ENCODE measurements at regions of chr1 and their contacts with region 1.

Region 1: DNA sequence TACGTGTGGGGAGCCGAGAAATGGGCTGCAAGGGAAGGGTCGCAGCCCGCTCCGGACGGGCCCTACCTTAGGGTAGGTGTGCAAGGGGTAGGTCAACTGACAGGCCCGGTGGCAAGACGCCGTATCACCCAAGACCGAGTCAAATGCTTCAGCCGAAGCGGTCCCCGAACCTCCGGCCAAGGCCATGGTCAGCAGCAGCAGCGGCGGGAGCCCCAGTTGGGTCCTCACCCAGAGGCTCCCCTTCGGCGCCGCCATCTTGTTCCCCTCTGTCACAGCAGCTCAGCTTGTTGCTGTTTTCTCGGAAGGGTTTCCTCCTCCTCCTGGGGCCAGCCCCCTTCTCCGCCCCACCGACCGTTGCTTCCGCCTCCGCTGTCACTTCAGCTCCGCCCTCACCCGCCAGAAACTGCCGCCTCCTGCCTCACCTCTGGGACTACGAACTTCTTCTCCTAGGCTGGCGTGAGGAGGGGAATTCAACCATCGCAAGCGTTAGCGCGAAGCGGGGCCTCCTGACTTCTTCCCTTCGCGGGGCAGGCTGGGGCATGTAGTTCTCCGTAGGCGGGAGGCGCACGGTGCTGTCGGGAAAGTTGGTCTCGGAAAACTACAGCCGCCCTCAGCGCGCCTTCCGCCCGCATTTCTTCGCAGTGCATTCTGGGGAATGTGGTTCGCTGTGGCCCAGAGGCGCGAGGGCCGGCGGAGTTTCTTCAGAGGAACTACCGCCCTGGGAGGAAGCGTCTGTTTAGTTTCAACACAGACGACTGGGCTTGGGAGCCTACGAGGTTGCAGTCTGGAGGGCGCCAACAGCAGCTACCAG is at the starts of genes TCEANC2 and TMEM59:
- DNase-seq: peak; percentile 99
- H3K4me3 Mint-ChIP-seq: no peak within 1 kb of the TSS
- H3K27ac Mint-ChIP-seq: no peak within 1 kb of the TSS
- H3K4me1 Mint-ChIP-seq: peaks cover 28% of the 10 kb centered on the region
- H3K27me3 Mint-ChIP-seq: no peaks in the 10 kb centered on the region
- total RNA-seq, gene TCEANC2: 10.0 and 11.6 TPM in 2 replicates
- total RNA-seq, gene TMEM59: 99.3 and 127 TPM in 2 replicates

Region 2: GRCh38 chr1:53326088-53326597 is 727.0 kb before region 1 on chr1:
- intact Hi-C with region 1: loop called (anchors 5 kb)
- DNase-seq: peak; percentile 98
- H3K4me3 Mint-ChIP-seq: peak overlapping the region; percentile 99
- H3K27ac Mint-ChIP-seq: peak overlapping the region; percentile 97
- H3K4me1 Mint-ChIP-seq: peaks cover 40% of the 10 kb centered on the region
- H3K27me3 Mint-ChIP-seq: no peaks in the 10 kb centered on the region

Region 3: DNA sequence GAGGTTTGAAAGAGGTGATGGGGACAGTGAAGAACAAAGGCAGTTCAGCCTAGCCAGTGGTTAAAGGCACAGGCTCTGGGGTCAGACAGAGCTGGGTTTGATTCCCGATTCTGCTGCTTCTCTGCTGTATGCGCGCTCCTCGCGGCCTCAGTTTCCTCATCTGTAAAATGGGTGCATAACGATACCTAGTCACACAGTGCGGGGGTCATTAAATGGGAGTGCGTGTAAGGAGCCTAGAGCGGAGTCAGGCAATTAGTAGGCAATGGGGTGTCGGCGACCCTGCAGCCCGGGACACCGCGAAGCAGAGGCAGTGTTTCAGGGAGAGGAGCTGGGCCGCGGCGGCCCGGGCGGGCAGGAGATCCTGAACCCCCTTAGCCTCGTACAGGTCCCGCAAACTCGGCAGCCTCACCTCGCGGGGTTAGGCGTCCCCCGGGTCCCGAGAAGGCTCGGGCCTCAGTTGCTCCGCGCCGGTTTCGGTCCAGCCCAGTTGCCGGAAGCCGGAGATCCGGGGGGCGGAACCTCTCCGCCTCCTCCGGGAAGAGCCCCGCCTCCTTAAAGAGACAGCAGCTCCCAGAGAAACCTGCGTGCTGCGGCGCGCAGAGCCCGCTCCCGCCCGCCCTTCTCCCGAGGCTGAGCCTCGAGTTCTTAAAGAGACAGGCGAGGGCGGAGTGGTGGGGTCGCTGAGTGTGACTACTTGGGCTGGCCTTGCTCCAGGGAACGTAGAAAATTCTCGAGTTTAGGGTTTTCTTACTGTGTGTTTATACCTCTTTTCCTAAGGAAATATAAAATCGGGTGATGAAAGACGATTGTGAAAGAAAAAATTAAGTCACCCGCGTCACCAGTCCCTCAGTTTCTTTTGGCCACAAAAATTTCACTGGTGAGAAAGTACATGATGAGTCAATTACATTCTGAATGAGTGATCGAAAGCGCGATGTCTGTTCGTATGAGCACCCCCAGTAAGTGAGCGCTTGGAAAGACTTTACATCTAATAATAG is 163.5 kb before region 1 on chr1 and contains the start of gene YIPF1:
- intact Hi-C with region 1: loop called (anchors 1 kb)
- DNase-seq: peak; percentile 98
- H3K4me3 Mint-ChIP-seq: peak within 1 kb of the TSS; percentile 98
- H3K27ac Mint-ChIP-seq: peak within 1 kb of the TSS; percentile 90
- H3K4me1 Mint-ChIP-seq: peaks cover 34% of the 10 kb centered on the region
- H3K27me3 Mint-ChIP-seq: no peaks in the 10 kb centered on the region
- total RNA-seq, gene YIPF1: 14.6 and 15.6 TPM in 2 replicates

Region 4: GRCh38 chr1:54199765-54200518 is 146.8 kb after region 1 on chr1 and contains the starts of genes CYB5RL and MRPL37:
- intact Hi-C with region 1: loop called (anchors 1 kb)
- DNase-seq: peak; percentile 98
- H3K4me3 Mint-ChIP-seq: peak within 1 kb of the TSS; percentile 88
- H3K27ac Mint-ChIP-seq: peak within 1 kb of the TSS; percentile 73
- H3K4me1 Mint-ChIP-seq: peaks cover 29% of the 10 kb centered on the region
- H3K27me3 Mint-ChIP-seq: no peaks in the 10 kb centered on the region
- total RNA-seq, gene CYB5RL: 10.1 and 11.3 TPM in 2 replicates
- total RNA-seq, gene MRPL37: 158 and 162 TPM in 2 replicates

Region 5: DNA sequence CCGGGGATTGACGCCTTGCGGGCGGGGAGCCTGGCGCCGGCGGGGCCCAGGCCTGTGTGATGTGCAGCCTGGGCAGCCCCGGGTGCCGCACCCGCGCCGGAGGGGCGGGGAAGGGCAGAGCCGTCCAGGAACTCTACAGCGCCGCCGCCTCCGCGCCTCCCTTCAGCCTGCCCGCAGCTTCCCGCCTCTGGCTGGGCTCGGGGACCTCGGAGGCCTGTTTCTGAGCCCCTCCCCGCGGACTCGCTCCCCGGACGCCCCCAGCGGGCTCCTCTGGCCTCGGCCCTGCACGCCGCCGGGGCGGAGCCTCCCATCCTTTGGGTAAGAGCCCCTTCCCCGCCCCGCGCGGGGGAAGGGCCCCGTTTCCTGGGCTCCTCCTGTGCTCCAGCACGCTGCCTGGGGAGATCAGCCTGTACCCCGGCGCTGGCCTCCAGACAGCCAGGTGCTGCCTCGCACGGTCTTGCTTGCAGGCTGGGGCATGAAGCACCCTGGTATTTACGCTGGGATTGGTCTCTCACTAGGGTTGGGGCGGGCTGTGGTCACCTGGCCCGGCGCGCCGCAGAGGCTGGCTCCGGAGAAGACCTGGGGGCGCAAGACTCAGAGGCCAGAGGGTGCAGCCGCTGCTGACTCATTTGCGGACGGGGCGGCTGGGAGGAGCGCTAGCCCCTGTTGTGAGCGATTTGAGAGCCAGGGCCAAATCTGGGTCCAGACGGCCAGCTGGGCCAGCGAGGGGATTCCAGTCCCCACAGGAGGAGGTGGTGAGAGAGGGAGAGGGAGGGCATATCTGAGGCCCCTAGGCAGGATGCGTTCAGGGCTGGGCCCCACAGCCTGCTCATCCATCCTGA is 489.2 kb after region 1 on chr1:
- intact Hi-C with region 1: loop called (anchors 5 kb)
- DNase-seq: peak; percentile 89
- H3K4me3 Mint-ChIP-seq: peak overlapping the region; percentile 80
- H3K27ac Mint-ChIP-seq: peak overlapping the region; percentile 18
- H3K4me1 Mint-ChIP-seq: peaks cover 13% of the 10 kb centered on the region
- H3K27me3 Mint-ChIP-seq: peaks cover 11% of the 10 kb centered on the region

Region 6: DNA sequence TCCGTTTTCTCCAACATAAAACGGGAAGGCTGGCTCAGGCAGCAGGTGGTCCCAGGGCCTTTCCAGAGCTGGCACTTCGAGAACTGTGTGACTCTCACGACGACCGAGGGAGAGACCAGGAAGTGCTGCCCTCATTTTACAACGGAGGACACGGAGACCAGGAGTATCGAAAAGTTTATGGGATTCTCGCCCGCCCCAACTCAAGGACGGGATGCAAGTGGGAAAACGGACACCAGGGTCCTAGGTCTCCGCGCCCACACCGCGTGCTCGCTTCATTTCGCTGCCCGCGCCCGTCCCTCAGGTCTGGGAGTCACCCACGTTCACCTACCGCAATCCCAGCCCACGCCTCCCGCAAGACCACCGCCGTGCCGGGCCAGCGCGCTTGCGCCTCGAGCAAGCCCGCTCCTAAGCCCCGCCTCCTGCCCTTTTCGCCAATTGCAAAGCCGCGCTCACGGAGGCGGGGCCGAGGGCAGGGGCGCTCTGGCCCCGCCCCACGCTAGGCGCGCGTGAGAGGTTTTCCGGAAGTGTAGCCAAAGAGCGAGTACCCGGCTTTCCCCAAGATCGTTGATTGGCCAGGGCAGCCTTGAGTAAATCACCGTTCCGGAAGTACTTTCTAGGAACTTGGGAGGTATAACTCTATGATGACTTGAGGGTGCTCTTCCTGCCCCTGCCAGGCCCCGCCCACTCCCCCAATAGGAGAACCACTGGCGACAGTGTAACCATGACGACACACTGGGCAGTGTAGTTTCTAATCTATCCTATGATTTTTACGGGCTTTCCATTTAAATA is 711.2 kb after region 1 on chr1 and contains the start of gene PARS2:
- intact Hi-C with region 1: loop called (anchors 1 kb)
- DNase-seq: peak; percentile 99
- H3K4me3 Mint-ChIP-seq: peak within 1 kb of the TSS; percentile 93
- H3K27ac Mint-ChIP-seq: peak within 1 kb of the TSS; percentile 94
- H3K4me1 Mint-ChIP-seq: peaks cover 11% of the 10 kb centered on the region
- H3K27me3 Mint-ChIP-seq: no peaks in the 10 kb centered on the region
- total RNA-seq, gene PARS2: 7.1 and 7.8 TPM in 2 replicates